ENCODE measurements at regions of chr17 and their contacts with region 1.

Region 1: GRCh38 chr17:38982858-38983746 is 15.9 kb upstream of the FBXO47 start:
- DNase-seq: peak; percentile 68
- ATAC-seq: peak; percentile 55; the same call in 1 of the 2 replicates
- H3K4me3 ChIP-seq: no peak overlapping the region
- H3K27ac ChIP-seq: no peak overlapping the region
- H3K4me1 ChIP-seq: peaks cover 4% of the 10 kb centered on the region; the same call in 1 of the 2 replicates
- H3K27me3 ChIP-seq: no peaks in the 10 kb centered on the region
- CTCF ChIP-seq: peak; percentile 77

Region 2: GRCh38 chr17:38752119-38752929 is 230.8 kb before region 1 on chr17 and contains the start of gene PSMB3:
- CTCF ChIA-PET with region 1: no interaction called
- POLR2A ChIA-PET with region 1: no interaction called
- intact Hi-C with region 1: no loop called
- DNase-seq: peak; percentile 98
- ATAC-seq: peak; percentile 68
- H3K4me3 ChIP-seq: peak within 1 kb of the TSS; percentile 94
- H3K27ac ChIP-seq: peak within 1 kb of the TSS; percentile 64
- H3K4me1 ChIP-seq: peaks cover 16% of the 10 kb centered on the region
- H3K27me3 ChIP-seq: no peaks in the 10 kb centered on the region
- CTCF ChIP-seq: no peak
- total RNA-seq, gene PSMB3: 366 and 441 TPM in 2 replicates

Region 3: DNA sequence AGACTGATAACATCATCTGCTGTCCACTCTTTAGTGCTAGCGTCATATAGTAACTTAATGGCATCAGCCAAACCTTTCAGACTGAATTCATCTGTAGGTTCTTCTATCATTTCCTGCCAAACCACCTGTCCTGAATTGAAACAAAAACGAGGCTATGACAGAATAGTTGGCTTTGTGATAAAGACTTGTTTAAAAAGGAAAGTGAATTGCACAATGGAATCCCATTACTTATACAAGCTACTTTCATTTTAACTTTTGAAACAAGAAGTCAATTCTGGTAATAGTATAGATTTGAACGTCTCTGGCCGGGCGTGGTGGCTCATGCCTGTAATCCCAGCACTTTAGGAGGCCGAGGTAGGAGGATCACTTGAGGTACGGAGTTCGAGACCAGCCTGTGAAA is 39.5 kb before region 1 on chr17:
- CTCF ChIA-PET with region 1: no interaction called
- POLR2A ChIA-PET with region 1: no interaction called
- intact Hi-C with region 1: no loop called
- DNase-seq: no peak
- ATAC-seq: no peak
- H3K4me3 ChIP-seq: no peak overlapping the region
- H3K27ac ChIP-seq: no peak overlapping the region
- H3K4me1 ChIP-seq: no peaks in the 10 kb centered on the region
- H3K27me3 ChIP-seq: no peaks in the 10 kb centered on the region
- CTCF ChIP-seq: no peak

Region 4: DNA sequence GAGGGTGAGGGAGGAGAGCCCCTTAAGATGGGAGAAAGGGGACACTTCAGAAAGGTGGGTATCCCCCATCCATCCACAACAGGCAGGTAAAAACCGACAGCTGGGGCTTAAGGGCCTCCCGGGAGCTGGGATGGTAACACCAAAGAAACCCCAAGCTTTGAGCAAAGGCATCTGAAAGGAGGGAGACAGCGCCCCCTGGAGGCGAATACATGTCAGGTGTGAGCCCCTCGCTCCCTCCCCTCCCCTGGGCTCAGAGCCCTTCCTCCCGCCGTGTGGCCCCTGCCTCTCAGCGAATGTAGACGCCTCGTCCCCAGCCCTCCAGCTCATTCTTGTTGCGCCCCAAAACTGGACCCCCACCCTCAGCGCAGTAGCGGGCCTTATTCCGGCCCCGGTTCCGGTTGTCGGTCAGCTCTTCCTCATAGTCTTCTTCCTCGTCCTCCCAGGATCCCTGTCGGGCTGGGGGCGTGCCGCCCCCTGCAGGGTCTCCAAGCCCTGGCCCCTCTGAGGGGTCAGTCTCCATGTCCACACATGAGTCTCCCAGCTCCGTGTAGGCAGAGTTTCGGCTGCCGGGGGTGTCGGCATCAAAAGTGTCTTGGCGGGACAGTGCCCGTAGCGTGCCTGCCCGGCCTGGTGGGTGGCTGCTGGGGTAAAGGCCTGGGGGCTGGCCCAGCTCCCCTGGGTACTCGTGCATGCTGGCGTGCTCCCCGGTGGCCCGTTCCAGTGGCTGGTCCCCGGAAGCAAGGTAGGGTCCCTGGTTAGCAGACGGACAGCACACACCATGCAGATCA is 192.0 kb after region 1 on chr17:
- CTCF ChIA-PET with region 1: interaction called, 15 read pairs
- POLR2A ChIA-PET with region 1: no interaction called
- intact Hi-C with region 1: no loop called
- DNase-seq: peak; percentile 43
- ATAC-seq: 0 out of 2 replicates have a peak, but pooled peaks have one; percentile 37
- H3K4me3 ChIP-seq: no peak overlapping the region
- H3K27ac ChIP-seq: no peak overlapping the region
- H3K4me1 ChIP-seq: peaks cover 11% of the 10 kb centered on the region; the same call in 1 of the 2 replicates
- H3K27me3 ChIP-seq: no peaks in the 10 kb centered on the region
- CTCF ChIP-seq: peak; percentile 76